Esophagus muscularis mucosa (tissue), 4 donors: ENCODE measurements at regions of chr9 and their contacts with region 1.

Region 1: GRCh38 chr9:125200210-125201047 is at the start of gene RABEPK:
- DNase-seq: peak; percentile 96
- H3K4me3 ChIP-seq: peak within 1 kb of the TSS; percentile 68 to 84 (median 78)
- H3K27ac ChIP-seq: peak within 1 kb of the TSS; percentile 90 to 96 (median 93)
- H3K4me1 ChIP-seq: peaks cover 13 to 31% (median 16%) of the 10 kb centered on the region in 4 donors
- H3K27me3 ChIP-seq: no peaks in the 10 kb centered on the region
- CTCF ChIP-seq: no peak
- EP300 ChIP-seq: no peak
- POLR2A ChIP-seq: peak; percentile 72
- total RNA-seq, gene RABEPK: 11.2 to 21.6 (median 13.7) TPM

Region 2: GRCh38 chr9:124940693-124941453 is 259.6 kb before region 1 on chr9 and contains the start of gene GOLGA1:
- intact Hi-C with region 1: loop called (anchors 5 kb)
- DNase-seq: peak; percentile 98
- H3K4me3 ChIP-seq: peak within 1 kb of the TSS; percentile 74 to 88 (median 80)
- H3K27ac ChIP-seq: peak within 1 kb of the TSS; percentile 93 to 98 (median 93)
- H3K4me1 ChIP-seq: peaks cover 11 to 22% (median 17%) of the 10 kb centered on the region in 4 donors
- H3K27me3 ChIP-seq: peaks cover 0 to 5% (median 0%) of the 10 kb centered on the region in 4 donors
- CTCF ChIP-seq: peak in 1 of 3 experiments; percentile 11
- EP300 ChIP-seq: no peak
- POLR2A ChIP-seq: peak; percentile 71
- total RNA-seq, gene GOLGA1: 22.5 to 26.5 (median 24.7) TPM